ENCODE measurements at regions of chr6 and their contacts with region 1.

Region 1: DNA sequence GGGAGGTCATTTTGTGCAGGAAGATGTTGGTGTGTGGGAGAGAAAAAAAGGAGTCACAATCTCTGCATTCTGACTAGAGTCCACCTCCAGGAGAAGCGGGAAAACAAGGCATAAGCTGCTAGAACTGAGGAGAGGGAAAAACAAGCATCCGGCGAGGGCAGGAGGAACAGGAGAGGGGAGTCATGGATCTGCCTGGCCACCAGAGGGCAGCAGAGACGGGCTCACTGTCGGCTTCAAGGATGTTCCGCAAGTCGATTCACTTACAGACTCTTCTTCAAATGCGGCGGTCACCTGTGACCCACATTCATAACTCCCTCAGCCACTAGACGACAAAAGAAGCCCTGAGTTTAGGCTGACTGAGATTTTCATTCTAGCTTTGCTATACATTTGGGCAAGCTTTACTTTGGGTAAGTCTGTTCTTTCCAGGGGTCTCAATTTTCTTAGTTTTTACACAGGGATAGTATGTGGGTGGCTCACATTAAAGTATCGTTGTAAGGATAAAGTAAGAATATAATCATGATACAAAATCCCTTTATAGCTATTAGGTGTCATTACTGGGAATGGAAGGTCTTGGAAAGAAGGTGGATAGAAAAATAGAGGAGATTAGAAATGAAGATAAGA is 6.6 kb upstream of the BTNL2 start:
- DNase-seq: peak; percentile 91
- H3K4me3 Mint-ChIP-seq: no peak overlapping the region
- H3K27ac Mint-ChIP-seq: no peak overlapping the region
- H3K4me1 Mint-ChIP-seq: peaks cover 10% of the 10 kb centered on the region
- H3K27me3 Mint-ChIP-seq: peaks cover 42% of the 10 kb centered on the region

Region 2: GRCh38 chr6:32244946-32245398 is 168.6 kb before region 1 on chr6:
- CTCF ChIA-PET with region 1: interaction called, 4 read pairs
- POLR2A ChIA-PET with region 1: no interaction called
- intact Hi-C with region 1: loop called (anchors 5 kb)
- DNase-seq: peak; percentile 74
- H3K4me3 Mint-ChIP-seq: no peak overlapping the region
- H3K27ac Mint-ChIP-seq: no peak overlapping the region
- H3K4me1 Mint-ChIP-seq: peaks cover 20% of the 10 kb centered on the region
- H3K27me3 Mint-ChIP-seq: peaks cover 8% of the 10 kb centered on the region

Region 3: GRCh38 chr6:32402812-32403211 is 10.7 kb before region 1 on chr6:
- CTCF ChIA-PET with region 1: interaction called, 15 read pairs
- POLR2A ChIA-PET with region 1: no interaction called
- intact Hi-C with region 1: no loop called
- DNase-seq: no peak
- H3K4me3 Mint-ChIP-seq: no peak overlapping the region
- H3K27ac Mint-ChIP-seq: no peak overlapping the region
- H3K4me1 Mint-ChIP-seq: no peaks in the 10 kb centered on the region
- H3K27me3 Mint-ChIP-seq: peaks cover 33% of the 10 kb centered on the region

Region 4: DNA sequence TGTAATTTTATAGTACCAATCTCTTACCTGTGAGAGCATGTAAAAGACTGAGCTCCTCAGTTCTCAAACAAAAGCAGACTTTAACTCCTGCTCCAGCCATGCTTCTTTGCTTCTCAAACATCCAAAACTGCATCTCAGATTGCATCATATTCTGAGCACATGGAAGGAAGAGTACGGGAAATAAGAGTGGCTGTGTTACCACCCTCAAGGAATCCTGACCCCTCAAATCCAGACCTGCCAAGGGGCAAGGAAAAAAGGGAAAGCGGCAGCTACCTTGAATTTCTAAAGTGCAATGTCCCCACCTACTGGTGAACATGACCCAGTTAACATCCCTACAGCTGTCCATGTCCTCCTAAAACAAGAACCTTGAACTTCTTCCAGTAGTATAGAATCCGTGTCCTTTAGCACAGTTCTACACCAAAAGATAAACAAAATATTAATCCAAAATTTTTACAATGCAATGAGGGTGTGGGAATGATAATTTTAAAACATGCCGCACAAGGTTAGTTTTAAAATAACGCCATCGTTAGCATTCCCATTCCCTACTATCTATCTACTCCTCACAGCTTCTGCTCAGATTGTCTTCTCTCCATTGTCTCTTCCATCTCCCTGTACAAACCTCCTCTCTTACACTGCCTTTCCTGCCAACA is 287.0 kb after region 1 on chr6:
- CTCF ChIA-PET with region 1: interaction called, 112 read pairs
- POLR2A ChIA-PET with region 1: no interaction called
- intact Hi-C with region 1: loop called (anchors 1 kb)
- DNase-seq: peak; percentile 20
- H3K4me3 Mint-ChIP-seq: no peak overlapping the region
- H3K27ac Mint-ChIP-seq: no peak overlapping the region
- H3K4me1 Mint-ChIP-seq: peaks cover 2% of the 10 kb centered on the region
- H3K27me3 Mint-ChIP-seq: peaks cover 18% of the 10 kb centered on the region

Region 5: GRCh38 chr6:32785781-32786533 is 372.4 kb after region 1 on chr6:
- CTCF ChIA-PET with region 1: interaction called, 67 read pairs
- POLR2A ChIA-PET with region 1: no interaction called
- intact Hi-C with region 1: no loop called
- DNase-seq: peak; percentile 21
- H3K4me3 Mint-ChIP-seq: no peak overlapping the region
- H3K27ac Mint-ChIP-seq: no peak overlapping the region
- H3K4me1 Mint-ChIP-seq: no peaks in the 10 kb centered on the region
- H3K27me3 Mint-ChIP-seq: peaks cover 42% of the 10 kb centered on the region